ENCODE measurements at regions of chr2 and their contacts with region 1.

Region 1: DNA sequence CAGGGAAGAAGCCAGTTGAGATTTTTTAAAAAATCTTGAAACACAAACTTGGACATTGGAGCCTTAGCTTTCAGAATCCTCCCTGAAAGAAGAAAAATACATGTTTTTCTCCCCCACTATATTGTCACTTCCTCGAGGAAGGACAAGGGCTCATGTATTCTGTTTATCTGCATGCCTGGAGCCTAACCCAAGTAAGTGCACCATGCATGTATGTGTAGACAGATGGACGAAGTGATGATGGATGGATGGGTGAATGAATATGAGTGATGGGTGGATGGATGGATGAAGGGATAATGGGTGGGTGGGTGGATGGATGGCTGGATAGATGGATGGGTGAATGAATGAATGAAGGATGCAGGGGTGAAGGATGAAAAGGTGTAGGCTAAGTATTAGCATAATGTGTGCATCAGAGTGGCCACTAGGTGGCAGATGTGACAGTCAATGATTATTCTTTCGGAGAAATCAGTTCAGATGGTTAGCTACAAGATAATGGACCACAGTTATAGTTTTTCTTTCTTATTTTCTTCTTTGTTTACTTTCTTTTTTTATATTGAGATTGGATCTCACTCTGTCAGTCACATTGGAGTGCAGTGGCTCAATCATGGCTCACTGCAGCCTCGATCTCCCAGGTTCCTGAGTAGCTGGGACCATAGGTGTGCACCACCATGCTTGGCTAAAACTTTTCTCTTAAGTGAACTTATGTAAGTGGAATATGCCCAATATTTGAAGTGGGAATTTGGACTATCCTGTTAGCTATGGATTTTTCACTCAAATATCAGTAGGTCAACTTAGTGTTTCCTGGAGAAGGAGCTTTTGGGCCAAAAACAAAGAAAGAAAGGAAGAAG is 18.5 kb upstream of the CCDC93 start:
- DNase-seq: no peak
- ATAC-seq: peak; percentile 39 to 69
- H3K4me3 ChIP-seq: no peak overlapping the region
- H3K27ac ChIP-seq: no peak overlapping the region
- H3K4me1 ChIP-seq: no peaks in the 10 kb centered on the region
- H3K27me3 ChIP-seq: peaks cover 0 to 4% (median 0%) of the 10 kb centered on the region in 3 donors
- CTCF ChIP-seq: peak; percentile 33 to 71 (median 57)
- POLR2A ChIP-seq: no peak

Region 2: GRCh38 chr2:117692001-117692763 is 340.2 kb before region 1 on chr2:
- in situ Hi-C with region 1: no loop called
- intact Hi-C with region 1: no loop called
- DNase-seq: no peak
- ATAC-seq: no peak
- H3K4me3 ChIP-seq: no peak overlapping the region
- H3K27ac ChIP-seq: no peak overlapping the region
- H3K4me1 ChIP-seq: no peaks in the 10 kb centered on the region
- H3K27me3 ChIP-seq: no peaks in the 10 kb centered on the region
- CTCF ChIP-seq: no peak
- POLR2A ChIP-seq: no peak

Region 3: GRCh38 chr2:118774458-118775133 is 742.2 kb after region 1 on chr2:
- in situ Hi-C with region 1: loop called in 1 of 4 experiments (anchors 25 kb)
- intact Hi-C with region 1: no loop called
- DNase-seq: peak; percentile 27 to 65
- ATAC-seq: peak; percentile 85 to 93
- H3K4me3 ChIP-seq: peak overlapping the region; percentile 53 to 66 (median 60)
- H3K27ac ChIP-seq: peak overlapping the region; percentile 78 to 85 (median 79)
- H3K4me1 ChIP-seq: peaks cover 0 to 12% of the 10 kb centered on the region in 2 donors
- H3K27me3 ChIP-seq: no peaks in the 10 kb centered on the region
- CTCF ChIP-seq: no peak
- POLR2A ChIP-seq: peak; percentile 47 to 49

Region 4: DNA sequence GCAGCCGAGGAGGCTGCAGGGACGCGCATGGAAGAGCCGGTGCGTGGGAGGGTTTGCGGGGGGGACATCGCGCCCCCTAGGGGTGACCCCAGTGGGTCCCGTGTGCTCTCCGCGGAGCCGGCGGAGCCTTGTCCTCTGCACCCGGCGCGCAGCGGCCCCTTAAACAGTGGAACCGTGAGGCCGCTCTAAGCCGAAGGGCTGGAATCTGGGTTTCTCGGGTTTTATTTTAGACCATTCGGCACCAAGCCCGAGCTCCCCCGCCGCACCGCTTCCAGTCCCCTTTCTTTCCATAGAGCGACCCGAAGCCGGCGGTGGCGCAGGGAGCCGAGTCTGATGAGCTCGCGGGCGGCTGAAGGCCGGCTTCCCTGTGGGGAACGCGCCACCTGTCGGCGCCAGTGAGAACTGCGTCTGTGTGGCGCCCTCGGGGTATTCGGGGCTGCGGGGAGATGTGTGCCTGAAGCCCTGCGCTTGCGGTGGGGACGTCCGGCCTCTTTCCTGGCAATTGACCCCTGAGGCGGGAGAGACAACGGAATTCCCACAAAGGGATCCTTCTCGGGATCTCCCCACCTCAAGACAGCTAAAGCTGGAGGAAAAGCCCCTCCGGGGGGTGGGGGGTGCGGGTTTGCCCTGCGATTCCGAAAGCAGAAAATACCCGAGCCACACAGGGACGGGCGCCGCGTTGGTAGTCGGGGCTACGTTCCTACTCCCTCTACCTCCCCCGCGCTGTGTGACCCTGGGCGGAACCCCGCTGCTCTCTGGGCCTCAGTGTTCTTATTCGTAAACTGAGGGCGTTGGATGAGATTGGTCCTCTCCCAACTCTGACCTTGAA is 823.3 kb after region 1 on chr2:
- in situ Hi-C with region 1: loop called (anchors 10 to 25 kb)
- intact Hi-C with region 1: no loop called
- DNase-seq: peak; percentile 65 to 79
- ATAC-seq: peak; percentile 63 to 65
- H3K4me3 ChIP-seq: peak overlapping the region; percentile 64 to 87 (median 73)
- H3K27ac ChIP-seq: peak overlapping the region; percentile 92 to 97 (median 96)
- H3K4me1 ChIP-seq: peaks cover 0 to 10% of the 10 kb centered on the region in 2 donors
- H3K27me3 ChIP-seq: peaks cover 0 to 14% (median 7%) of the 10 kb centered on the region in 3 donors
- CTCF ChIP-seq: peak; percentile 90 to 99 (median 98)
- POLR2A ChIP-seq: no peak

Measured in gastrocnemius medialis (tissue), 4 donors.